SK-N-SH (cell line): ENCODE measurements at regions of chr1 and their contacts with region 1.

Region 1: GRCh38 chr1:31663622-31664452 is 19.2 kb upstream of the PEF1 start:
- DNase-seq: peak; percentile 93
- H3K4me3 ChIP-seq: no peak overlapping the region; a peak in 1 of 4 replicates
- H3K27ac ChIP-seq: no peak overlapping the region
- H3K4me1 ChIP-seq: peaks cover 7 to 20% of the 10 kb centered on the region in 2 experiments; a peak in 2 of 4 replicates
- H3K27me3 ChIP-seq: no peaks in the 10 kb centered on the region
- CTCF ChIP-seq: peak; percentile 90
- EP300 ChIP-seq: no peak
- RAD21 ChIP-seq: peak; percentile 94

Region 2: DNA sequence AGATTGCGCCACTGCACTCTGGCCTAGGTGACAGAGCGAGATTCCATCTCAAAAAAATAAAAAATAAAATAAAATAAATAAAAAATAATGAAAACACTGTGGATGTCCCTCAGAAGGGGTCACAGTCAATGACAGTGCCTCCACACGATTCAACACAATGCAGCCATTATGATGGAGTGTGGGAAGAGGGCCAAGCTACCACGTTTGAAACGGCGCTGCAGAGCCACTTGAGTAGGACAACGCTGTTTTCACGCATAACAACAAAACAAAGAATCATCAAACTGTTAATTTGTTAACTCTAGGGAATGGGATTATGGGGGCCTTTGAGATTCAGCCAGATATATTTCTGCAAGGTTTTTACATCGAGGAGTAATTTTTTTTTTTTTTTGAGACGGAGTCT is 460.6 kb before region 1 on chr1:
- CTCF ChIA-PET with region 1: no interaction called
- POLR2A ChIA-PET with region 1: no interaction called
- DNase-seq: no peak
- H3K4me3 ChIP-seq: no peak overlapping the region
- H3K27ac ChIP-seq: no peak overlapping the region
- H3K4me1 ChIP-seq: peaks cover 0 to 3% of the 10 kb centered on the region in 2 experiments; a peak in 1 of 4 replicates
- H3K27me3 ChIP-seq: no peaks in the 10 kb centered on the region
- CTCF ChIP-seq: no peak
- EP300 ChIP-seq: no peak
- RAD21 ChIP-seq: no peak

Region 3: GRCh38 chr1:31651089-31651420 is 12.8 kb before region 1 on chr1:
- CTCF ChIA-PET with region 1: interaction called, 13 read pairs
- POLR2A ChIA-PET with region 1: no interaction called
- DNase-seq: no peak
- H3K4me3 ChIP-seq: no peak overlapping the region
- H3K27ac ChIP-seq: no peak overlapping the region
- H3K4me1 ChIP-seq: peaks cover 0 to 10% of the 10 kb centered on the region in 2 experiments; a peak in 2 of 4 replicates
- H3K27me3 ChIP-seq: no peaks in the 10 kb centered on the region
- CTCF ChIP-seq: no peak
- EP300 ChIP-seq: no peak
- RAD21 ChIP-seq: no peak

Region 4: DNA sequence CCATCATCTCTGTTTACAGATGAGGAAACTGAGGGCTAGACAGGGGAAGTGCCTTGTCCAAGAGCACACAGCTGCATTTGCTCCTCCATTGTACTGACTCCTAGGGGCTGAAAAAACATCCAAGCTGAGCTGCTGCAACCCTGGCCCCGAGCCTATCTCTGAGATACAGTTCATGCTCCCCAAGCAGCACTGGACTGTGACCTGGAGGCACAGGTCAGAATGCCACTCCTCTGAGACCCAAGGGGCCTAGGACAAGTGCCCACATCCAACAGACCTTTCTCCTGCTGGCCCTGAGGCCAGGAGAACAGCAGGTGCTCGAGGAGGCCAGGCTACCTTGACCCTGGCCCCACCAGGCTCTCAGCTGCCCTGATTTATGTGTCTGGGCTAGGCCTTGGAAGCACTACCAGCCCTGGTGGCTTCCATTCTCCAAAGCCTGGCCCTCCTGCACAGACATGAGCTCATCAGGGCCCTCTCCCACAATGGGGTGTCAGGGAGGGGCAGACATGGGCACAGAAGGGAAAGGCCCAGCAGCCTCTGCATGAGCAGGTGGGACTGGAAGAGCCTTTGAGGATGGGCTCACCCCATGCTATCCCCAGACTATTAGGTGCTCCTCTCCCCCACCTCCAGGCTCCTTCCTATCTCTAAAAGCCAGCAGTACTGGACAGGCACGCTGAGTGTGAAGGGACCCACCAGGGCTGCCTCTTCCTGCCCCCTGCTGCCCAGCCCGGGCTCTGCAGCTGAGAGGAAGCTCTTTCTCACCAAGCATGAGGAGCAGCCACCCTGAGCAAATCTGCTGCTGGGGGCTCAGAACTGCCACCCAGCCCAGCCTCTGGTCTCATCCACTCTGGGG is 81.5 kb after region 1 on chr1:
- CTCF ChIA-PET with region 1: interaction called, 111 read pairs
- POLR2A ChIA-PET with region 1: no interaction called
- DNase-seq: peak; percentile 89
- H3K4me3 ChIP-seq: no peak overlapping the region; a peak in 1 of 4 replicates
- H3K27ac ChIP-seq: peak overlapping the region in 1 of 2 experiments; percentile 18; a peak in 1 of 4 replicates
- H3K4me1 ChIP-seq: peaks cover 0 to 45% of the 10 kb centered on the region in 2 experiments; a peak in 1 of 4 replicates
- H3K27me3 ChIP-seq: no peaks in the 10 kb centered on the region
- CTCF ChIP-seq: peak; percentile 80
- EP300 ChIP-seq: no peak
- RAD21 ChIP-seq: peak; percentile 78